Tibial artery (tissue), 4 donors: ENCODE measurements at regions of chr4 and their contacts with region 1.

Region 1: GRCh38 chr4:103046416-103047290 is 27.1 kb upstream of the SLC9B1 start:
- DNase-seq: no peak
- H3K4me3 ChIP-seq: no peak overlapping the region
- H3K27ac ChIP-seq: no peak overlapping the region
- H3K4me1 ChIP-seq: no peaks in the 10 kb centered on the region
- H3K27me3 ChIP-seq: no peaks in the 10 kb centered on the region
- CTCF ChIP-seq: peak; percentile 38 to 62

Region 2: GRCh38 chr4:102849579-102850104 is 197.0 kb before region 1 on chr4:
- intact Hi-C with region 1: no loop called
- DNase-seq: no peak
- H3K4me3 ChIP-seq: no peak overlapping the region
- H3K27ac ChIP-seq: no peak overlapping the region
- H3K4me1 ChIP-seq: no peaks in the 10 kb centered on the region
- H3K27me3 ChIP-seq: no peaks in the 10 kb centered on the region
- CTCF ChIP-seq: no peak

Region 3: GRCh38 chr4:103099691-103100392 is 53.2 kb after region 1 on chr4 and contains the start of gene BDH2:
- intact Hi-C with region 1: loop called (anchors 5 kb)
- DNase-seq: peak; percentile 64 to 67
- H3K4me3 ChIP-seq: peak within 1 kb of the TSS; percentile 54 to 56
- H3K27ac ChIP-seq: peak within 1 kb of the TSS; percentile 75 to 81
- H3K4me1 ChIP-seq: peaks cover 0 to 35% (median 13%) of the 10 kb centered on the region in 4 donors
- H3K27me3 ChIP-seq: no peaks in the 10 kb centered on the region
- CTCF ChIP-seq: peak; percentile 74 to 81

Region 4: DNA sequence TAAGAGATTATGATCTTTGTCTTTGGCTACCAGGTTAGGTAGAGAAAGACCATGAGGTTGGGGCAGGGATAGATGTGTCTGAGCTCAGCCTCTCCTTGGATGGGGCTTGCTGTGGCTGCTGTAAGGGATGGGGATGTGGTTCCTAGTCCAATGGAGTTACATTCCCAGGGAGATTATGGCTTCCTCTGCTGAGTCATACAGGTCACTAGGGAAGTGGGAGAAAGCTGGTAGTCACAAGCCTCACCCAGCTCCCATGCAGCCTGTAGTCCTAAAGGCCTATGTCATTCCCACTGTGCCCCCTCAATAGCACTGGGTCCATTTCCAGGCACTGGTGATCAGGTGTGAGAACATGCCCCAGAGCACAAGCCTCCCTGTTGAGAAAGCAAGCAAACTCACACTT is 222.1 kb after region 1 on chr4:
- intact Hi-C with region 1: no loop called
- DNase-seq: no peak
- H3K4me3 ChIP-seq: no peak overlapping the region
- H3K27ac ChIP-seq: no peak overlapping the region
- H3K4me1 ChIP-seq: no peaks in the 10 kb centered on the region
- H3K27me3 ChIP-seq: no peaks in the 10 kb centered on the region
- CTCF ChIP-seq: no peak

Region 5: DNA sequence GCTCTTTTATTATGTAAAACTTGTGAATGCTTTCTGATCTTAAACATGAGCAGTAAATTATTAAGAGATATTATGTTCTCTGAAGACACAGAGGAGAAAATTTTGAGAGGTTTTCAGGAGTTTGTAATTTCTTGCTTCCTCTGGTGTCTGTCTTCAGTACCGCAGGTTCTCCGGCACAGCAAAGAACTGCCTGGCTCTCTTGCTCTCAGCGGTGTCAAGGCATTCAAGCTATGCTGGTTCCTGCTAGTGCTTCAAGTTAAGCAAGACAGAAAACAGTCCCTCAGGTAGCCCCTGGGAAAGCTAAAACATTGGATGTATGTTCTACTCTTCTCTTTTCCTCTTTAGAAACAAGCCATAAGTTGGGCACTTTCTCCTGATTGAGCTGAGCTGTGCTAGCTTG is 271.7 kb after region 1 on chr4:
- intact Hi-C with region 1: no loop called
- DNase-seq: no peak
- H3K4me3 ChIP-seq: no peak overlapping the region
- H3K27ac ChIP-seq: no peak overlapping the region
- H3K4me1 ChIP-seq: no peaks in the 10 kb centered on the region
- H3K27me3 ChIP-seq: no peaks in the 10 kb centered on the region
- CTCF ChIP-seq: no peak